ENCODE measurements at regions of chr5 and their contacts with region 1.

Region 1: DNA sequence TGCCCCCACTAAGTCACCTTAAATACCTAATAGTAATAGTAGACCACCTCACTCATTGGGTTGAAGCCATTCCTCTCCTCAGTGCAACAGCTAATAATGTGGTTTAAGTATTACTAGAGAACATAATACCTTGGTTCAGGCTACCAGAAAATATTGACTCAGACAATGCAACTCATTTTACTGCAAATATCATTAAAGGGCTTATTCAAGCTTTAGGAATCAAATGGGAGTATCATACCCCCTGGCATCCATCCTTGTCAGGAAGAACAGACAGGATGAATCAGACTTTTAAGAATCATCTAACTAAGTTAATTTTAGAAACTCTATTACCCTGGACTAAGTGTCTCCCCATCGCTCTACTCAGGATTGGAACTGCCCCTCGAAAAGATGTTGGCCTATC is 6.8 kb upstream of the RNF180 start:
- DNase-seq: no peak
- ATAC-seq: no peak
- H3K4me3 ChIP-seq: no peak overlapping the region
- H3K27ac ChIP-seq: no peak overlapping the region
- H3K4me1 ChIP-seq: peaks cover 7% of the 10 kb centered on the region
- H3K27me3 ChIP-seq: no peaks in the 10 kb centered on the region
- CTCF ChIP-seq: no peak
- POLR2A ChIP-seq: no peak

Region 2: DNA sequence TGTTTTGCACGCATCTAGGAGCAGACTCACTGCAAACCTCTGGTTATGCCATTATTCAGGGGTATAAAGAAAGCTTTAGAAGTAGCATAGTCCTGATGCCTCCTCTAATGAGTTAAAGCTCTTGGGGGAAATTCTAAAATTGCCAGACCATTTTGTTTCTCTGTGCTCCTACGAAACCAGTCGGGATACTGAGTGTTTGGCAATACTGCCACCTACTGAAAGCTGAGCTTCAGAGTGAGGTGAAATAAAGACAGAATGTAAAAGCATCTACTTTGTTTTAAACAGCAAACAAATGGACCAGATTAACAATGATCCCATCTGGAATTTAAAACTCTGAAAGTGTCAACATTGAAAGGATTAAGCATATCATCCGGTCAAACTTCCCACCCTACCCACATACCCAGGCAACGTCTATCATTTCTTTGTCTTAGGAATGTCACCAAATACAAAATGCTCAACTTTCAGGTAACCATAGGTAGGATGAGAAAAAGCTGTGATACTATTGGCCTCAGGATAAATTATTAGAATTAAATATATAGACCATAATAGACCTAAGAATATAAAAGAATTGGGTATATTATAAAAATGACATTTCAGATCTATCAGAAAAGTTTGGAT is 453.6 kb after region 1 on chr5:
- intact Hi-C with region 1: loop called (anchors 10 kb)
- DNase-seq: peak; percentile 37 to 64 (median 46)
- ATAC-seq: peak; percentile 69
- H3K4me3 ChIP-seq: no peak overlapping the region
- H3K27ac ChIP-seq: no peak overlapping the region
- H3K4me1 ChIP-seq: peaks cover 10% of the 10 kb centered on the region
- H3K27me3 ChIP-seq: no peaks in the 10 kb centered on the region
- CTCF ChIP-seq: peak; percentile 47 to 84 (median 77)
- POLR2A ChIP-seq: no peak